ENCODE measurements at regions of chr4 and their contacts with region 1.

Region 1: GRCh38 chr4:177339477-177340374 is 30.1 kb downstream of the NEIL3 start:
- DNase-seq: peak; percentile 10
- H3K4me3 ChIP-seq: no peak overlapping the region
- CTCF ChIP-seq: peak; percentile 53

Region 2: DNA sequence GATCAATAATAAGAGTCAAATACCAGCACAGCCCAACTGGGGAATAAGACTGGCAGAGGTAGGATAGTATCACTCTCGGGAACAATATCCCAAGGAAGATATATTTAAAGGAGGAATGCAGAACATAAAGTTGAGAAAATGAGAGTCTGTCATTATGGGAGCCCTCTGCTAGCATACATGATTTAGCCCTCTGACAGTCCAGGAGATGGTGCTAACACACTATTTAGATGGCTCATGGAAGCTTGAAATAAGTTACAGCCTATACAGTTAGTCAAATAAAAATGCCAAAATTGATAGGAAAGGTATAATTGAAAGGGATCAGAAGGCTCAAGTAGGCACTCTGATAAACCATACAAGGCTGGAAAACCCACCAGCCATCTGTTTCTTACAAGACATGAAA is 231.0 kb before region 1 on chr4:
- CTCF ChIA-PET with region 1: interaction called, 64 read pairs
- POLR2A ChIA-PET with region 1: no interaction called
- DNase-seq: no peak
- H3K4me3 ChIP-seq: no peak overlapping the region
- CTCF ChIP-seq: peak; percentile 52

Region 3: GRCh38 chr4:177250056-177250696 is 89.5 kb before region 1 on chr4:
- CTCF ChIA-PET with region 1: interaction called, 83 read pairs
- POLR2A ChIA-PET with region 1: no interaction called
- DNase-seq: no peak
- H3K4me3 ChIP-seq: no peak overlapping the region
- CTCF ChIP-seq: peak; percentile 99

Region 4: GRCh38 chr4:177322266-177322665 is 17.5 kb before region 1 on chr4:
- CTCF ChIA-PET with region 1: interaction called, 38 read pairs
- POLR2A ChIA-PET with region 1: no interaction called
- DNase-seq: no peak
- H3K4me3 ChIP-seq: no peak overlapping the region
- CTCF ChIP-seq: no peak